ENCODE measurements at regions of chr17 and their contacts with region 1.

Region 1: GRCh38 chr17:20992987-20993862 is 49.6 kb downstream of the USP22 start:
- DNase-seq: peak; percentile 82
- H3K4me3 Mint-ChIP-seq: no peak overlapping the region
- H3K27ac Mint-ChIP-seq: no peak overlapping the region
- H3K4me1 Mint-ChIP-seq: no peaks in the 10 kb centered on the region
- H3K27me3 Mint-ChIP-seq: no peaks in the 10 kb centered on the region

Region 2: DNA sequence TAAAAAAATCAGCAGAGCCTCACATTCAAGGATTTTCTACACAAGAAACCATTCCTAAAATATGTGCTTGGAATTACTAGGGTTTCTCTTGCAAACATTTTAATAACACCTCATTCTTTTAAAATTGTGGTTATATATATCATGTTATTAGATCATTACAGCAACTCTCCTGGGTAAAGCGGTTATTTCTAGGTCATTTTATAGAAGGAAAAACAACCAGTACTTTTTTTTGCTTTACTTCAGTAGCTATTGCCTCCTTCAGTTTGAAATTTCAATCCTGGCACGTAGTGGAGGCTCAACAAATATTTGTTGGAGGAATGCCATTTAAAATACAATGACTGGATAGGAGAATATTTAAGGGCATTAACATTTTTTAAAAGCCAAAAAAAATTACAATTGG is 193.1 kb before region 1 on chr17:
- CTCF ChIA-PET with region 1: interaction called, 11 read pairs
- intact Hi-C with region 1: loop called (anchors 1 kb)
- DNase-seq: no peak
- H3K4me3 Mint-ChIP-seq: no peak overlapping the region
- H3K27ac Mint-ChIP-seq: no peak overlapping the region
- H3K4me1 Mint-ChIP-seq: peaks cover 2% of the 10 kb centered on the region
- H3K27me3 Mint-ChIP-seq: peaks cover 4% of the 10 kb centered on the region

Region 3: GRCh38 chr17:20896153-20896649 is 97.0 kb before region 1 on chr17:
- CTCF ChIA-PET with region 1: no interaction called
- intact Hi-C with region 1: loop called (anchors 2 kb)
- DNase-seq: peak; percentile 70
- H3K4me3 Mint-ChIP-seq: peak overlapping the region; percentile 15
- H3K27ac Mint-ChIP-seq: no peak overlapping the region
- H3K4me1 Mint-ChIP-seq: no peaks in the 10 kb centered on the region
- H3K27me3 Mint-ChIP-seq: peaks cover 5% of the 10 kb centered on the region

Region 4: DNA sequence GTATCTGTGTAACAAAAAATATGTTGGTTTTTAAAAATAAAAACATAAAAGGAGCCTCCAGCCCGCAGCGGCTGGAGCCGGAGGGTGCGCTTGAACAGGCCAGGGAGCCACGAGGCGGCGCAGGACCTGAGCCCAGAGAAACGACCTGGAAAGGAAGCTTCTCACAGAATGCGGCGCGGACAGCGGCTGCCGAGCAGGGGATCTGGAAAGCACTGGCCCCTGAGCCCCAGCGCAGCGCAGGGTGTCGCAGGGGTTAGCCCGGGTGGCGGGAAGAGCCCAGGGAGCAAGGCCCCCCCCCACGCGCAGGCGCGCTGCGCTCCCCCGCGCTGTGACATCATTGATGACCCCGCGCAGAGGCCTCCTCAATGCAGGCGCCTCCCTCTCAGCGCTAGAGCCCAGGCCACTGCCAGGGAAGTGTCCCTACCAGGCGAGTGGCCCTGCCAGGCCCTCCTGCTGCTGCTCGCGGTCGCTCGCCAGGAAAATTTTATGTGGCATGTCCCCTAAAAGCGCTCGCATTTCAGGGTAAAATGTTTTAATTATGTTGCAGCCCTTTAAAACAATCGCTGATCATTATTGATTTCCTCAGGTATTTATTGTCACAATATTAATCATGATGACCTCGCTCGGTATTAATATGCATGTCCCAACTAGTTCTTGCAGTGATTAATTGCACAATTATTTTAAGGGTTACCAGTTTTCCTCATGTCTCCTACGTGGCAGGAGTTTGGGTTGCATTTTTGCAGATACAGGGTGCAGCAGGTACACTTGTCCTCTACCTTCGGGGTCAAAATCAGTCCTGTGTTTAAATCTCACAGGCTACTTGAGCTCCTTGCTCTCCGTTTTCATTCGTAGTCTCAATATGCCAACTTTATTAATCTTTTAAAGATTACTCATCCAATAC is 84.6 kb before region 1 on chr17:
- CTCF ChIA-PET with region 1: no interaction called
- intact Hi-C with region 1: loop called (anchors 1 kb)
- DNase-seq: peak; percentile 88
- H3K4me3 Mint-ChIP-seq: peak overlapping the region; percentile 78
- H3K27ac Mint-ChIP-seq: peak overlapping the region; percentile 65
- H3K4me1 Mint-ChIP-seq: peaks cover 5% of the 10 kb centered on the region
- H3K27me3 Mint-ChIP-seq: peaks cover 6% of the 10 kb centered on the region

Region 5: GRCh38 chr17:20944014-20944865 is 49.0 kb before region 1 on chr17:
- CTCF ChIA-PET with region 1: interaction called, 18 read pairs
- intact Hi-C with region 1: loop called (anchors 1 kb)
- DNase-seq: peak; percentile 61
- H3K4me3 Mint-ChIP-seq: no peak overlapping the region
- H3K27ac Mint-ChIP-seq: no peak overlapping the region
- H3K4me1 Mint-ChIP-seq: peaks cover 4% of the 10 kb centered on the region
- H3K27me3 Mint-ChIP-seq: no peaks in the 10 kb centered on the region

Region 6: DNA sequence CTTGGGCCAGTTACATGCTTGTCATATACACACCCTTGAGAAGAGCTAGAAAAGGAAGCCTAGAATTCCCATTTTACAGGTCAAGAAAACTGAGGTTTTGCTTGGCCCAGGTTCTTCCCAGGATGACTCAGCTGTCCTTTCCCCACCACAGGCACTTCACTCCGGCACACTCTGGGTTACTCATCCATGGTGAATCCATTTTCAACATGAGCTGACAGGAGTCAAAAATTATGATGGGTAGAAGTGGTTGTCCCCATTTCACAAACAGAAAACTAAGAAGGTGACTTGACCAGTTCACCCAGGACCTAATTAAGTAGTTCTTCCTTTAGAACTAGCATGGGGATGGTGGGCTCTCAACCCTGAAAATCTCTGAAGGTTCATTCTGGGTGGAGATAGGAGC is 17.7 kb before region 1 on chr17:
- CTCF ChIA-PET with region 1: interaction called, 12 read pairs
- intact Hi-C with region 1: no loop called
- DNase-seq: no peak
- H3K4me3 Mint-ChIP-seq: no peak overlapping the region
- H3K27ac Mint-ChIP-seq: no peak overlapping the region
- H3K4me1 Mint-ChIP-seq: no peaks in the 10 kb centered on the region
- H3K27me3 Mint-ChIP-seq: peaks cover 14% of the 10 kb centered on the region

Region 7: DNA sequence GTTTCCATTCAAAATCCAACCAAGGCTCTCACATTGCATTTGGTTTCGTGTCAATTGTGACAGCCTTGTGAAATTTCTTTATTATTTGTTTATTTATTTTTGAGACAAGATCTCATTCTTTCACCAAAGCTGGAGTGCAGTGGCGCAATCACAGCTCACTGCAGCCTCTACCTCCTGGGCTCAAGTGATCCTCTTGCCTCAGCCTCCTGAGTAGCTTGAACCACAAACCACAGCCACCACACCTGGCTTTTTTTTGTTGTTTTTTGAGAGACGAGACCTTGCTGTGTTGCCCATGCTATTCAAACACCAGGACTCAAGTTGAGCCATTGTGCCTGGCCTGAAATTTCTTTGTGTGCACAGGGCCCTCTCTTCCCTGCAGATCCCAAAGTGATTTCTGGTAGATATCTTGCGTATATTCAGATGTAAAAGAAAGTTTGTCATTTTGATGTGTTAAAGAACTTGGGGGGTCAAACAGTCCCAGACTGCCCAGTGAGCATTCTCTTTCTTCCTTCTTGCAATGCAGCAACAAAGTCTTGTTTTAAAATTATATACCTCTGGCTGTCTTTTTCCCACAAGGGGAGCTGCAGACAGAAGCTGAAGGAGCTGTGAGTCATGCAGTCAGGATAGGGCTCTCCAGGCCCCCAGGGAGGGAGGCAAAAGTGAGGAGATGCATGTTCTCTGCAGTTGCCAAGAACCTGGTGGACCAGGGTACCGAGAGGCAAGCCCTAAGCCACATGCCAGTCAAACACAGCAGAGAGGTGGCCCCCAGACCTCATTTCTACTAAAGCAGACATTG is 65.1 kb after region 1 on chr17:
- CTCF ChIA-PET with region 1: no interaction called
- intact Hi-C with region 1: no loop called
- DNase-seq: no peak
- H3K4me3 Mint-ChIP-seq: no peak overlapping the region
- H3K27ac Mint-ChIP-seq: no peak overlapping the region
- H3K4me1 Mint-ChIP-seq: no peaks in the 10 kb centered on the region
- H3K27me3 Mint-ChIP-seq: no peaks in the 10 kb centered on the region

Region 8: GRCh38 chr17:22266231-22266630 is 1273.0 kb after region 1 on chr17:
- CTCF ChIA-PET with region 1: no interaction called
- intact Hi-C with region 1: no loop called
- DNase-seq: no peak
- H3K4me3 Mint-ChIP-seq: no peak overlapping the region
- H3K27ac Mint-ChIP-seq: no peak overlapping the region
- H3K4me1 Mint-ChIP-seq: no peaks in the 10 kb centered on the region
- H3K27me3 Mint-ChIP-seq: no peaks in the 10 kb centered on the region

Measured in activated naive CD4-positive, alpha-beta T cell treated with anti-CD3 and anti-CD28 coated beads for 36 hours (primary cell).